ENCODE measurements at regions of chr9 and their contacts with region 1.

Region 1: GRCh38 chr9:71604197-71605063 is 163.9 kb downstream of the CEMIP2 start:
- H3K4me3 ChIP-seq: no peak overlapping the region
- H3K27ac ChIP-seq: no peak overlapping the region
- H3K4me1 ChIP-seq: no peaks in the 10 kb centered on the region
- CTCF ChIP-seq: no peak

Region 2: GRCh38 chr9:71620746-71621145 is 16.3 kb after region 1 on chr9:
- CTCF ChIA-PET with region 1: interaction called, 11 read pairs
- POLR2A ChIA-PET with region 1: no interaction called
- H3K4me3 ChIP-seq: no peak overlapping the region
- H3K27ac ChIP-seq: no peak overlapping the region
- H3K4me1 ChIP-seq: no peaks in the 10 kb centered on the region
- CTCF ChIP-seq: no peak

Region 3: GRCh38 chr9:71683598-71684235 is 79.3 kb after region 1 on chr9:
- CTCF ChIA-PET with region 1: interaction called, 13 read pairs
- POLR2A ChIA-PET with region 1: no interaction called
- H3K4me3 ChIP-seq: no peak overlapping the region
- H3K27ac ChIP-seq: no peak overlapping the region
- H3K4me1 ChIP-seq: 0 out of 2 replicates have a peak, but pooled peaks cover 3% of the 10 kb centered on the region
- CTCF ChIP-seq: no peak

Region 4: GRCh38 chr9:71768388-71769174 is 164.2 kb after region 1 on chr9 and contains the start of gene CEMIP2:
- CTCF ChIA-PET with region 1: interaction called, 40 read pairs
- POLR2A ChIA-PET with region 1: interaction called, 7 read pairs
- H3K4me3 ChIP-seq: peak within 1 kb of the TSS; percentile 92
- H3K27ac ChIP-seq: peak within 1 kb of the TSS; percentile 88
- H3K4me1 ChIP-seq: no peaks in the 10 kb centered on the region
- CTCF ChIP-seq: no peak

Region 5: GRCh38 chr9:71819115-71819739 is 214.8 kb after region 1 on chr9:
- CTCF ChIA-PET with region 1: interaction called, 17 read pairs
- POLR2A ChIA-PET with region 1: no interaction called
- H3K4me3 ChIP-seq: no peak overlapping the region
- H3K27ac ChIP-seq: no peak overlapping the region
- H3K4me1 ChIP-seq: no peaks in the 10 kb centered on the region
- CTCF ChIP-seq: no peak